Dorsolateral prefrontal cortex (tissue), 120 donors: ENCODE measurements at regions of chr5 and their contacts with region 1.

Region 1: DNA sequence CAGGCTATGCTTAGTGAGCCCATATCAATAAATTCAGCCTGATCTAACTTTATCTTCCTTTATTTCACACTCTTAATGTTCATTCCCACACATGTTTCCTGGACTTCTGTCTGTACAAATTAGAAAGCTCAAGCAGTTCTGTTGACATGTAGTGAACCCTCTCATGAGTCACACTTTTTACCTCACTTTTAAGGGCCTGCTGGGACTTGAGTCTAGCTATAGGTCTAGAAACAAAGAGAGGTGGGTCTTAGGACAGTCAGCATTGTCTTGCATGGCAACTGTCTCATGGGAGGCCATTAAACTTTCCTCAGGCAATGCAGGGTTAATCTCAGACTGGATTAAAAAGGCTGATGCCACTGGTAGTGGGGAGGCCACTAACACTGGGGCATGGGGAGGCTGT is 8.6 kb upstream of the CCNH start:
- DNase-seq: no peak
- H3K4me3 ChIP-seq: no peak overlapping the region
- H3K27ac ChIP-seq: no peak overlapping the region
- H3K27me3 ChIP-seq: no peaks in the 10 kb centered on the region
- CTCF ChIP-seq: no peak

Region 2: DNA sequence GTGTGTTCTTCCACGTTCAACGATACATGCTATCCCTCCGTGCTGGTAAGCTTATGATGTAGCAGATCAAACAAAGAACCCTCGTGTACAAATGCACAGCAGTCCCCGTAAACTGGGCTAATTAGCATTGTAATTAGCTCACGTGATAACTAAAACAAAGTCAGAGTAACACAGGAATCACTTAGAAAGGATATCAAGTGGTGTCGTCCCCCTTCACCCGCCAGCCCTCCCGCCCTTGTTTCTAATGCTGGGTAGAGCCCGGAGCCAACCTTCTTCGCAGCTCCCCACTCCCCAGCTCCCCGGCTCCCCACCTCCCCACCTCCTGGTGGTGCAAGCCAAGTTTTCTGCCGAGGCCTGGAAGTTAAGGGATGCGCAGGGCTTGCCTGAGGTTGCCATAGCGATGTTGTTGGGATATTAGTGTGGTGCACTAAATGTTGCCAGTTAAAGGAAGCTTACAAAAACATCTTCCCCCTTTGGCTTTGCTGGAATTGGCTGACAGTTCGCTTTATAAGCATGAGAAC is 349.4 kb after region 1 on chr5:
- intact Hi-C with region 1: loop called (anchors 10 kb)
- DNase-seq: peak; percentile 22 to 58 (median 40)
- H3K4me3 ChIP-seq: peak overlapping the region; percentile 8 to 65 (median 45)
- H3K27ac ChIP-seq: peak overlapping the region in 56 of 59 donors; percentile 15 to 86 (median 70)
- H3K27me3 ChIP-seq: no peaks in the 10 kb centered on the region
- CTCF ChIP-seq: peak in 1 of 56 donors; percentile 4